Aorta (tissue), 5 donors: ENCODE measurements at regions of chr12 and their contacts with region 1.

Region 1: DNA sequence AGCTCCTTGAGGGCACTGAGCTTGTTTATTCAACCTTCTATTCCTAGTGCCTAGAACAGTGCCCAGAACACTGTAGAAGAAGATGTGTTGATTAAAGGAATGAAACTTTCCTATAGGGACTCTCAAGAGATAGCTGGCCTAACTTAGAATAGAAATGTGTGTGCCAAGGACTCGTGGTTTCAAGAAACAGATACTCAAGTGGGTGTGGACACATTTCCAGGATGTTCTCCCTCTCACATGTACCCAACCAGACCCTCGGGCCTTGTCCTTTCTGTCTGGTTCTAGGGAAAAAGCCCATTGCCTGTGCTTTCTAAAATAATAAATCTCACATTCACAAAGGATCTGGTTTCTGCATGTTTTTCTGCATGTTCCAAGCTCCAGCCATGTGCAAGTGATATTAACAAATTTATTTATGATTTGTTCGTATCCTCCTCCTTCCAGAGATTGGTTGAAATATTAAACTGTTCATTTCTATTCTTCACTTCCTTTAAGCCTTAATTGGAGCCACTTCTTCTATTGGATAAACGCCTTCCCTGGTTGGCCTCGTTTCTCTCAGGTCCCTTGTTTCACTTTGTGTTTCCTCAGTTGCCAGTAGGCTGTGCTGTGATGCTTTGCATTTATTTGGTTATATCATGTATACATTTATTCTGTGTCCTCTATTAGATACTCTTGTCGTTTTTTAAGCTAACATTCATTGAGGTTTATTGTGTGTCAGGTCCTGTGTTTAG is 89.8 kb downstream of the CRADD start:
- DNase-seq: no peak
- ATAC-seq: peak; percentile 88
- H3K4me3 ChIP-seq: no peak overlapping the region
- H3K27ac ChIP-seq: no peak overlapping the region
- H3K4me1 ChIP-seq: peaks cover 0 to 1% of the 10 kb centered on the region in 2 donors
- H3K27me3 ChIP-seq: no peaks in the 10 kb centered on the region

Region 2: GRCh38 chr12:93502802-93503623 is 263.9 kb before region 1 on chr12:
- intact Hi-C with region 1: loop called (anchors 10 kb)
- DNase-seq: no peak
- ATAC-seq: no peak
- H3K4me3 ChIP-seq: no peak overlapping the region
- H3K27ac ChIP-seq: no peak overlapping the region
- H3K4me1 ChIP-seq: no peaks in the 10 kb centered on the region
- H3K27me3 ChIP-seq: no peaks in the 10 kb centered on the region

Region 3: DNA sequence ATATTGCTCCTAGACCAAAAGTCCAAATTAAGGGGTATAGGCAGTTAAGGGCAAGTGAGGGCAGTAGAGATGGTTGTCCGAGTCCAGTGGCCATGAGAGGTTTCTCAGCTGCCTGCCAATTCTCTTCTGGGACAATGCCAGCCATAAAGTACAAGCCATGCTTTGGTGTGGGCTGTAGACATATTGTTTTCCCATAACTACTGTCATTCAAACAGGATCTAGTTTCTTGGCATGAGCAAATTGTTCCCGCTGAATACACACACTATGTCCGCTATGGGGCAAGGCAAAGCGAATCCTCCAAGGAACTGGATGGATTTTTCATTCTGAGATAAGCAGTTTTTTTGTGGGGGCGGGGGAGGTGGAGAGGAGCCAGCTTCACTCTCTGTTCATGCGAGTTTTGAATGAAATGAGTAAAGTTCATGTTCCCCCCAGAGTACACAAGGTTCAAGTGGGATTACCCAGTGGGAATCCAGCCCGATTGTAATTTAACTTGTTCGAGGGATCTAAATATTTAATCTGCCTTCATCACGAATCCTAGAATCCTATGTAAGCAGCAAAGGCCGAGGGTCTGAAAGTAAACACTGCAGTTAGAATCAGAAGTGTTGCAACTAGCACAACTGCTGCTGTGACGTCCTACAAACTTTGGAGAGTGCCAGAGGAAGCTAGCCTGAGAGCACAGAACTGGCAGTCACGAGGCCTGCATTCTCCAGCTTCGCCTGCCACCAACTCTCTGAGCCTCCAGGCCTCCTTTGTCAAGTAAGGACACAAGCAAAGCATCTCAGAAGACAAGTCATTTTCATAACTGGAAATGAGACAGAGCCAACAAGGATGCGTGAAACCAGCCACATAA is 47.2 kb after region 1 on chr12:
- intact Hi-C with region 1: no loop called
- DNase-seq: peak; percentile 79 to 88
- ATAC-seq: peak; percentile 88
- H3K4me3 ChIP-seq: no peak overlapping the region
- H3K27ac ChIP-seq: peak overlapping the region; percentile 96 to 98
- H3K4me1 ChIP-seq: peaks cover 2 to 8% of the 10 kb centered on the region in 2 donors
- H3K27me3 ChIP-seq: no peaks in the 10 kb centered on the region

Region 4: DNA sequence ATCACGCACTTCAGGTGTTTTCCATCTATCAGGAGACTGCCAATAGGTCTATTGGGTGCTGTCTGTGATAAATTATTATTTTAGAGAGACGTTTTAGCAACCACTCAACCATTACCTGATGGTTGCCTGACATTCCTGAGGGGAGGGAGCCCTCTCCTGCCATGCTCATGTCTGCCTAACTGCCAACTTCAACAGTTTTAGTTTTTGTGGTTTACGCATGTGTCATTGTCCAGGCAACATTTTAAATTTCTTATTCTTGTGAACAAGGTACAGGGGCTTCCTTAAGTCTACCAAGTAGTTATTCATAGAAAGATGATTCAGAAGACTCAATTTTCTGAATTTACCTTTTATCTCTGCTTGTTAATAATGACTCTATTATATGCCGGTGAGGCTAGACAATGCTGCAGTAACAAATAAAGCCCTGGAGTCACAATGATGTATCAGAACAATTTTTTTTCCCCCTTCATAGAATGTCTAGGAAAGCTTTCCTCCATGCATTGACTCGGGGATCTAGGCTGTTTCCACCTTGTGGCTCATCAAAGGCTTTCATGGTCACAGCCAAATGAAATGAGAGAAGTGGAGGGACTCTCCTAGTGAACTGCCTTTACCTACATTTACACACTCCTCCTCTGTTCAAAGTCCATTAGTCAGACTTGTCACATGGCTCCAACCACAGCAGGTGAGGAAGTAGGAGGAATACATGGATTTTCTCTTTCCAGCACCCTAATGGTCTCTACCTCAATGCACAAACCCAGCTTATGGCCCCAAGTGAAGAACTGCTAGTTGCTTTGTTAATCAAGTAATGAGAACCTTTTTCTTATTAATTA is 136.0 kb after region 1 on chr12:
- intact Hi-C with region 1: loop called in 1 of 2 experiments (anchors 5 kb)
- DNase-seq: no peak
- ATAC-seq: no peak
- H3K4me3 ChIP-seq: no peak overlapping the region
- H3K27ac ChIP-seq: no peak overlapping the region
- H3K4me1 ChIP-seq: no peaks in the 10 kb centered on the region
- H3K27me3 ChIP-seq: no peaks in the 10 kb centered on the region

Region 5: DNA sequence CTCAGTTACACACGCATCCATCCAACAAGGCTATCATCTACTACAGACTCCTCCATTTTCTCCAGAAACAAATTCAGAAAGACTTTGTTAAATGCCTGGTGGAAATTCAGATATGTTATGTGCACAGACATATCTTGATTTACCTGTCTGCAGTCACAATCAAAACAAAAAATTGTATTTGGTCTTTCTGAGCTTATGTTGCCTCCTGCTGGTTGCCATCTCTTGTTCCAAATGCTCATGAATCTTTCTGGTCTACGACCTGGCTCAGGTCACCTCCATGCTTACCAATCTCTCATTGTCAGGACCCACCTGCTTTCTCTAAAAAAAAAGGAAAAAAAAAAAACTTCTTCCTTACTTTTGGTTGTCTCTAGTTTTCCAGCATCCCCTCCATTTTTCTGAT is 212.2 kb after region 1 on chr12:
- intact Hi-C with region 1: loop called (anchors 10 kb)
- DNase-seq: no peak
- ATAC-seq: no peak
- H3K4me3 ChIP-seq: no peak overlapping the region
- H3K27ac ChIP-seq: no peak overlapping the region
- H3K4me1 ChIP-seq: no peaks in the 10 kb centered on the region
- H3K27me3 ChIP-seq: no peaks in the 10 kb centered on the region

Region 6: GRCh38 chr12:94101738-94102660 is 335.0 kb after region 1 on chr12:
- intact Hi-C with region 1: loop called (anchors 2 to 5 kb)
- DNase-seq: peak; percentile 89 to 93
- ATAC-seq: peak; percentile 94
- H3K4me3 ChIP-seq: peak overlapping the region; percentile 50 to 85
- H3K27ac ChIP-seq: peak overlapping the region in 1 of 2 donors; percentile 20
- H3K4me1 ChIP-seq: no peaks in the 10 kb centered on the region
- H3K27me3 ChIP-seq: no peaks in the 10 kb centered on the region

Region 7: GRCh38 chr12:94149119-94149780 is 382.3 kb after region 1 on chr12:
- intact Hi-C with region 1: no loop called
- DNase-seq: peak; percentile 69 to 82
- ATAC-seq: peak; percentile 8
- H3K4me3 ChIP-seq: peak overlapping the region; percentile 42 to 55
- H3K27ac ChIP-seq: no peak overlapping the region
- H3K4me1 ChIP-seq: no peaks in the 10 kb centered on the region
- H3K27me3 ChIP-seq: no peaks in the 10 kb centered on the region